PC-9 (cell line): ENCODE measurements at regions of chr9 and their contacts with region 1.

Region 1: DNA sequence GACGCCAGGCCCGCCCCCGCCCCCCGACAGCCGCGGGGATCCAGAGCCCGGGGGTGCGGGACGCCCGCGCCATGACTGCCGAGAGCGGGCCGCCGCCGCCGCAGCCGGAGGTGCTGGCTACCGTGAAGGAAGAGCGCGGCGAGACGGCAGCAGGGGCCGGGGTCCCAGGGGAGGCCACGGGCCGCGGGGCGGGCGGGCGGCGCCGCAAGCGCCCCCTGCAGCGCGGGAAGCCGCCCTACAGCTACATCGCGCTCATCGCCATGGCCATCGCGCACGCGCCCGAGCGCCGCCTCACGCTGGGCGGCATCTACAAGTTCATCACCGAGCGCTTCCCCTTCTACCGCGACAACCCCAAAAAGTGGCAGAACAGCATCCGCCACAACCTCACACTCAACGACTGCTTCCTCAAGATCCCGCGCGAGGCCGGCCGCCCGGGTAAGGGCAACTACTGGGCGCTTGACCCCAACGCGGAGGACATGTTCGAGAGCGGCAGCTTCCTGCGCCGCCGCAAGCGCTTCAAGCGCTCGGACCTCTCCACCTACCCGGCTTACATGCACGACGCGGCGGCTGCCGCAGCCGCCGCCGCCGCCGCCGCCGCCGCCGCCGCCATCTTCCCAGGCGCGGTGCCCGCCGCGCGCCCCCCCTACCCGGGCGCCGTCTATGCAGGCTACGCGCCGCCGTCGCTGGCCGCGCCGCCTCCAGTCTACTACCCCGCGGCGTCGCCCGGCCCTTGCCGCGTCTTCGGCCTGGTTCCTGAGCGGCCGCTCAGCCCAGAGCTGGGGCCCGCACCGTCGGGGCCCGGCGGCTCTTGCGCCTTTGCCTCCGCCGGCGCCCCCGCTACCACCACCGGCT is 1.0 kb downstream of the FOXE1 start:
- DNase-seq: peak in 1 of 2 experiments; percentile 53
- H3K4me3 ChIP-seq: peak overlapping the region; percentile 64
- H3K27ac ChIP-seq: peak overlapping the region; percentile 56; the same call in 1 of the 2 replicates
- H3K4me1 ChIP-seq: peaks cover 6% of the 10 kb centered on the region; the same call in 1 of the 2 replicates
- H3K27me3 ChIP-seq: no peaks in the 10 kb centered on the region
- CTCF ChIP-seq: no peak

Region 2: GRCh38 chr9:97866848-97867247 is 12.8 kb after region 1 on chr9:
- CTCF ChIA-PET with region 1: interaction called, 11 read pairs
- POLR2A ChIA-PET with region 1: no interaction called
- intact Hi-C with region 1: no loop called
- DNase-seq: no peak
- H3K4me3 ChIP-seq: no peak overlapping the region
- H3K27ac ChIP-seq: no peak overlapping the region
- H3K4me1 ChIP-seq: peaks cover 11% of the 10 kb centered on the region; the same call in 1 of the 2 replicates
- H3K27me3 ChIP-seq: no peaks in the 10 kb centered on the region
- CTCF ChIP-seq: no peak

Region 3: GRCh38 chr9:97938081-97938644 is 84.1 kb after region 1 on chr9 and contains the start of gene HEMGN:
- CTCF ChIA-PET with region 1: no interaction called
- POLR2A ChIA-PET with region 1: no interaction called
- intact Hi-C with region 1: no loop called
- DNase-seq: no peak
- H3K4me3 ChIP-seq: no peak within 1 kb of the TSS
- H3K27ac ChIP-seq: no peak within 1 kb of the TSS
- H3K4me1 ChIP-seq: no peaks in the 10 kb centered on the region
- H3K27me3 ChIP-seq: peaks cover 5% of the 10 kb centered on the region; the same call in 1 of the 2 replicates
- CTCF ChIP-seq: no peak
- total RNA-seq, gene HEMGN: not detected in 2 replicates